ENCODE measurements at regions of chr10 and their contacts with region 1.

Region 1: GRCh38 chr10:5434017-5434753 is 21.8 kb downstream of the NET1 start:
- DNase-seq: peak in 4 of 5 donors; percentile 32 to 46 (median 40)
- H3K4me3 ChIP-seq: no peak overlapping the region
- H3K4me3 Mint-ChIP-seq: peak overlapping the region in 5 of 8 donors; percentile 25 to 45 (median 37)
- H3K27ac ChIP-seq: no peak overlapping the region
- H3K27ac Mint-ChIP-seq: peak overlapping the region in 6 of 7 donors; percentile 28 to 90 (median 84)
- H3K4me1 ChIP-seq: peaks cover 6% of the 10 kb centered on the region
- H3K4me1 Mint-ChIP-seq: peaks cover 6 to 13% (median 11%) of the 10 kb centered on the region in 4 donors
- H3K27me3 ChIP-seq: no peaks in the 10 kb centered on the region
- H3K27me3 Mint-ChIP-seq: no peaks in the 10 kb centered on the region

Region 2: DNA sequence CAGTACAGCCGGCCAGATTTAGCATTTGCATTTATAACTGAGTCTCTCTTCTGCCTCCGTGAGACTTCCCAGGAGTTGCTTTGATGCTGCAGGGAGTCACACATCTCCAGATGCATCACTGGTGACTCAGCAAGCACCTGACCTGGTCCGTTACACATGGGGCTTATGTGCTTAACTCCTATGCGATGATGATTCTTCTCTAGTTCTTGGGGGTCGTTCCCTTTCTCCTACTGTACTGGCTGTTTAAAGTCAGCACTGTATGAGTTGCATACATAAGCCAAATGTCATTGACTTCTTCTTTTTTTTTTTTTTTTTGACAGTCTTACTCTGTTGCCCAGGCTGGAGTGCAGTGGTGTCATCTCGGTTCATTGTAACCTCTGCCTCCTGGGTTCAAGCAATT is 621.2 kb before region 1 on chr10:
- CTCF ChIA-PET with region 1: interaction called, 33 read pairs
- POLR2A ChIA-PET with region 1: no interaction called
- intact Hi-C with region 1: loop called (anchors 1 kb)
- DNase-seq: no peak
- H3K4me3 ChIP-seq: no peak overlapping the region
- H3K4me3 Mint-ChIP-seq: no peak overlapping the region
- H3K27ac ChIP-seq: no peak overlapping the region
- H3K27ac Mint-ChIP-seq: no peak overlapping the region
- H3K4me1 ChIP-seq: peaks cover 6% of the 10 kb centered on the region
- H3K4me1 Mint-ChIP-seq: no peaks in the 10 kb centered on the region
- H3K27me3 ChIP-seq: no peaks in the 10 kb centered on the region
- H3K27me3 Mint-ChIP-seq: peaks cover 11 to 13% of the 10 kb centered on the region in 2 donors

Region 3: DNA sequence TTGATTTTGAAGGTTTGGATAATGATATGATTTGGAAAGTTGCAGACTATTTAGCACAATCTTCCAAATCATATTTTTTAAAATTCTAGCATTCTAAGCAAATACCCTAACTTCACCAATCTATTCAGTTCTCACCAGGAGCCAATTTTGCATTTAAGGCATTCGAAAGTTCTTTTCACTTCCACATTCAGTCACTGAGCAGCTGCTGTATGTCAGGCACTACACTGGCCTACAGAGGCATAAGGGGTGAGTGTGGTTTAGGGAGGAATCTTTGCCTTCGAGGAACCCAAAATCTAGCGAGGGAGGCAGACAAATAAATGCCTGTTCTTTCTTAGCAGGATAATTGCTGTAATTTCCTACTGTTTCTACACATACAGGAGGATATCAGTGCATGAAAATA is 80.1 kb before region 1 on chr10:
- CTCF ChIA-PET with region 1: no interaction called
- POLR2A ChIA-PET with region 1: no interaction called
- intact Hi-C with region 1: no loop called
- DNase-seq: no peak
- H3K4me3 ChIP-seq: no peak overlapping the region
- H3K4me3 Mint-ChIP-seq: no peak overlapping the region
- H3K27ac ChIP-seq: no peak overlapping the region
- H3K27ac Mint-ChIP-seq: no peak overlapping the region
- H3K4me1 ChIP-seq: no peaks in the 10 kb centered on the region
- H3K4me1 Mint-ChIP-seq: peaks cover 0 to 6% (median 2%) of the 10 kb centered on the region in 4 donors
- H3K27me3 ChIP-seq: no peaks in the 10 kb centered on the region
- H3K27me3 Mint-ChIP-seq: peaks cover 2 to 8% of the 10 kb centered on the region in 2 donors

Region 4: GRCh38 chr10:5385224-5385623 is 49.0 kb before region 1 on chr10:
- CTCF ChIA-PET with region 1: interaction called, 7 read pairs
- POLR2A ChIA-PET with region 1: no interaction called
- intact Hi-C with region 1: loop called (anchors 1 kb)
- DNase-seq: no peak
- H3K4me3 ChIP-seq: no peak overlapping the region
- H3K4me3 Mint-ChIP-seq: no peak overlapping the region
- H3K27ac ChIP-seq: no peak overlapping the region
- H3K27ac Mint-ChIP-seq: no peak overlapping the region
- H3K4me1 ChIP-seq: no peaks in the 10 kb centered on the region
- H3K4me1 Mint-ChIP-seq: peaks cover 0 to 2% (median 0%) of the 10 kb centered on the region in 4 donors
- H3K27me3 ChIP-seq: no peaks in the 10 kb centered on the region
- H3K27me3 Mint-ChIP-seq: peaks cover 2 to 9% of the 10 kb centered on the region in 2 donors

Region 5: GRCh38 chr10:5446390-5446926 is 12.3 kb after region 1 on chr10:
- CTCF ChIA-PET with region 1: interaction called, 17 read pairs
- POLR2A ChIA-PET with region 1: no interaction called
- intact Hi-C with region 1: no loop called
- DNase-seq: peak; percentile 46 to 72 (median 56)
- H3K4me3 ChIP-seq: peak overlapping the region in 1 of 2 donors; percentile 10
- H3K4me3 Mint-ChIP-seq: peak overlapping the region; percentile 81 to 90 (median 86)
- H3K27ac ChIP-seq: no peak overlapping the region
- H3K27ac Mint-ChIP-seq: peak overlapping the region; percentile 45 to 93 (median 85)
- H3K4me1 ChIP-seq: peaks cover 23% of the 10 kb centered on the region
- H3K4me1 Mint-ChIP-seq: peaks cover 13 to 40% (median 27%) of the 10 kb centered on the region in 4 donors
- H3K27me3 ChIP-seq: no peaks in the 10 kb centered on the region
- H3K27me3 Mint-ChIP-seq: no peaks in the 10 kb centered on the region

Region 6: DNA sequence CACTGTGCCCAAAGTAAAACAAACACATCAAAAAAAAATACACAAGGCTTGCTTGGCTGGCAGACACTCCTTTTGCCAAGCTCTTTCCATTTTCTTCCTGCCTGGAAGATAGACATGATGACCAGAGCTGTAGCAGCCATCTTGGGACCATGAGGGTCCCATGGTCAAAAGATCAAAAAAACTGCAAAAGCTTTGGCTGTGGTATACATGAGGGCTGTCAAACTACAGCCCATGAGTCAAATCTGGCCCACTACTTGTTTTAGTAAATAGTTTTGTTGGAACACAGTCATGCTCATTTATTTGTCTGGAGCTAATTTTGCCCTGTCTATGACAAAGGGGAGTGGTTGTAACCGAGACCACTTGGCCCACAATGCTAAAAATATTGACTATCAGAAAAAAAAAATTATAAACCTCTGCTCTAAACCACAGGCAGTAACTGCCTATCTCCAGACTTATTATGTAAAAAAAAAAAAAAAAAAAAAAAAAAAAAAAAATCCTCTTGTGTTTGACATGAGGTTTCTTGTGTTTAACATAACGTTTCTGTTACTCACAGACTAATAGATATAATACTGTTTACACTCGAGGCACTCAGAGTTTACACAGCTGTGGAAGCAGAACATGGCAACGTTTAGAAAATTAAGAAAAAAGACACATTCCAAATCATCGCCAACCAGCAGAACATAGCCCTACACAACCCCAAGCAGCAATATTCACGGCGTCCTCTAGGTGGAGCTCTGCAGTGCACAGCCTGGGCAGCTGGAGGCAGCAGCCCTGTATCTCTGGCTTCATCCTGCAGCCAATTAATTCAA is 195.3 kb after region 1 on chr10:
- CTCF ChIA-PET with region 1: interaction called, 468 read pairs
- POLR2A ChIA-PET with region 1: no interaction called
- intact Hi-C with region 1: no loop called
- DNase-seq: peak; percentile 76 to 83 (median 79)
- H3K4me3 ChIP-seq: no peak overlapping the region
- H3K4me3 Mint-ChIP-seq: peak overlapping the region in 6 of 8 donors; percentile 34 to 73 (median 52)
- H3K27ac ChIP-seq: no peak overlapping the region
- H3K27ac Mint-ChIP-seq: peak overlapping the region in 2 of 7 donors; percentile 32 to 76
- H3K4me1 ChIP-seq: peaks cover 11% of the 10 kb centered on the region
- H3K4me1 Mint-ChIP-seq: peaks cover 9 to 17% (median 12%) of the 10 kb centered on the region in 4 donors
- H3K27me3 ChIP-seq: no peaks in the 10 kb centered on the region
- H3K27me3 Mint-ChIP-seq: peaks cover 3 to 4% of the 10 kb centered on the region in 2 donors

Measured in CD4-positive, alpha-beta memory T cell (primary cell).